Naive thymus-derived CD8-positive, alpha-beta T cell (primary cell): ENCODE measurements at regions of chr20 and their contacts with region 1.

Region 1: GRCh38 chr20:62937366-62938104 is 412 bp upstream of the GID8 start:
- DNase-seq: peak; percentile 95 to 98 (median 96)
- ATAC-seq: peak; percentile 85 to 90
- H3K4me3 Mint-ChIP-seq: peak overlapping the region in 5 of 10 donors; percentile 93 to 100 (median 98)
- H3K27ac Mint-ChIP-seq: peak overlapping the region; percentile 92 to 100 (median 98)
- H3K4me1 Mint-ChIP-seq: peaks cover 21 to 52% (median 41%) of the 10 kb centered on the region in 4 donors
- H3K27me3 Mint-ChIP-seq: no peaks in the 10 kb centered on the region

Region 2: DNA sequence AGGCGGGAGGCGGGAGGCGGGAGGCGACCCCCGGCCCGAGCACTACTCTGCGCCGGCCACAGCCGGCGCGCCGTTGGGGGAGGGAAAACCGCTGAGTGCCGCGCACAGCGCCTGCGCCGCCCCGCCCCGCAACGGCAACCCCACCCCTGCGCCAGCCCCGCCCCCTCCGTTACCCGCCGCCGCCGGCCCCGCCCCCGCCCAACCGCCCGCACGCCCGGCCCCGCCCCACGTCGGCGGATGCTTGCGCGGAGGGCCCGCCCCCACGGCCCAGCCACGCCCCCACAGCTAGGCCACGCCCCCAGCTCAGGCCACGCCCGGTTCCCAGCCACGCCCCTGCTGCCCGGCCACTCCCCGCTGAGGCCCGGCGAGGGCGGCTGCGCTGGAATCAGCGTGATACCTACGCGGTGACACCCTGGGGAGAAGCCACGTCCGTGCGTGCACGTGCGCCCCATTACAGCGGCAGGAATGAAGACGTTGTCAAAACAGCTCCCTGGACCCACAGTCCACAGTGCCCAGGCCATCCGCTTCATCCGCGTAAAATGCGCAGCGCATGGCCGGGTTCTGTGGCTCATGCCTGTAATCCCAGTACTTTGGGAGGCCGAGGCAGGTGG is 75.7 kb before region 1 on chr20 and contains the start of gene TCFL5:
- POLR2A ChIA-PET with region 1: interaction called, 10 read pairs
- DNase-seq: peak; percentile 85 to 98 (median 94)
- ATAC-seq: peak; percentile 80 to 87
- H3K4me3 Mint-ChIP-seq: peak within 1 kb of the TSS; percentile 54 to 88 (median 72)
- H3K27ac Mint-ChIP-seq: peak within 1 kb of the TSS in 9 of 10 donors; percentile 37 to 94 (median 87)
- H3K4me1 Mint-ChIP-seq: peaks cover 9 to 29% (median 22%) of the 10 kb centered on the region in 4 donors
- H3K27me3 Mint-ChIP-seq: no peaks in the 10 kb centered on the region
- polyA plus RNA-seq, gene TCFL5: 1.0 to 2.1 (median 1.5) TPM

Region 3: GRCh38 chr20:62900052-62900691 is 37.4 kb before region 1 on chr20:
- POLR2A ChIA-PET with region 1: interaction called, 21 read pairs
- DNase-seq: peak; percentile 63 to 87 (median 77)
- ATAC-seq: peak; percentile 88 to 93
- H3K4me3 Mint-ChIP-seq: peak overlapping the region in 9 of 10 donors; percentile 54 to 85 (median 76)
- H3K27ac Mint-ChIP-seq: peak overlapping the region; percentile 33 to 96 (median 91)
- H3K4me1 Mint-ChIP-seq: peaks cover 18 to 40% (median 34%) of the 10 kb centered on the region in 4 donors
- H3K27me3 Mint-ChIP-seq: no peaks in the 10 kb centered on the region

Region 4: DNA sequence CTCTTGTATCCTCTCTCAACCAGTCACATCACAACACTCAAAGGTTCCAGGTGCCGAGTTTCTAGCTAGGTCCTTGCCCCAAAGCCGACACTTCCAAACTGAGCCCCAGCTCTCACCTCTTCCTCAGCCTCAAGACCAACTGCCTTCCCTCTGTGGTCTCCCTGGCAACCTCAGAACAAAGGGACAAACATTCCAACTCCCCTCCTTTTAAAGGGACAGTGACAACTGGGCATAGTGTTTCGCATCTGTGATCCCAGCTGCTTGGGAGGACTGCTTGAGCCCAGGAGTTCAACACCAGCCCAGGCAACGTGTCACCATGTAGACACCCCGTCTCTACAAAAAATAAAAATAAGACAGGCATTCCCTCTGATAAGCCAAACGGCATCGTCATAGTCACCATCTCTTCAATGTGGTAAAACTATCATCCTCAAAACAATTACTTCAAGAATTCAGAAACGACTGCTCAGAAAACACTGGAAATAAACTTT is 22.5 kb before region 1 on chr20:
- POLR2A ChIA-PET with region 1: interaction called, 45 read pairs
- DNase-seq: peak in 6 of 10 donors; percentile 40 to 53 (median 48)
- ATAC-seq: peak; percentile 36 to 48
- H3K4me3 Mint-ChIP-seq: peak overlapping the region; percentile 59 to 85 (median 78)
- H3K27ac Mint-ChIP-seq: peak overlapping the region; percentile 81 to 97 (median 94)
- H3K4me1 Mint-ChIP-seq: peaks cover 38 to 83% (median 82%) of the 10 kb centered on the region in 4 donors
- H3K27me3 Mint-ChIP-seq: no peaks in the 10 kb centered on the region

Region 5: DNA sequence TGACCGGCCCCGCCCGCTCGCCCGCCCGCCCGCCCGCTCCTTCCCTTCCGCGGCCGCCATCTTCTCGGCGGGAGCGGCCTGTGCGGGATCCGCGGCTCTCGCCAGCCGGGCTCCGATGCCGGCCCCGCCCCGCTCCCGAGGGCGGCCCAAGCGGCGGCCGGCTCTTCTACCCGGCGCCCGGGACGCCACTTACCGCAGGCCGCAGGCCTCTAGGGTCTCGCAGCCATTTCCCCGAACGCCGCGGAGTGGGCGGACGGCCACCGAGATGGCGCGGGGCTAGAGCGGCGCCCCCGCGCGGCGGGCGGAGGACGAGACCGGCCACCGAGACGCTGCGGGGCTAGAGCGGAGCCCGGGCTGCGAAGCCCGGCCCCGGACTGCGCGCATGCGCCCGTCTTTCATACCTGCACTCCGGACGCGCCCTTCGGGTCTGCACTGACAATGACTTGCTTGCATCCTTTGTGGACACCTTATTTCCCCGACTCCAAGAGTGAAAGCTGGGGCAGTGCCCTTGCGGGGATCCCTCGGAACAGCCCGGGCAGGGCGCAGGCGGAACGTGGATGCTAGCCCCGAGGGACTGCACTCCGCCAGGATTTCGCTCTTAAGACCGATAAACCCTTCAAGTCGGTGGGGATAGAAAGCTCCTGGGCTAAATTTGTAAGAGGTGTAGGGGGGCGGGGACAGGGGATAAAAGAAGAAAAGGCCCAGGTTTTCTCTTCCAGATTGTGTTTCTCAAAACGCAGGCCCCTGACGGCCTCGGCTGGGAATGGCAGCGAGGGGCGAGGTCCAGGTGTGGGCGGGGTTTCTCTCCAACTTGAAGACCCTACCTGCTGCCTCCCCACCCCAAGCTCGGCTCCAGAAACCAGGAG is 11.1 kb before region 1 on chr20 and contains the start of gene DIDO1:
- POLR2A ChIA-PET with region 1: interaction called, 111 read pairs
- DNase-seq: peak; percentile 77 to 92 (median 86)
- ATAC-seq: peak; percentile 79 to 84
- H3K4me3 Mint-ChIP-seq: peak within 1 kb of the TSS; percentile 91 to 98 (median 95)
- H3K27ac Mint-ChIP-seq: peak within 1 kb of the TSS; percentile 87 to 97 (median 95)
- H3K4me1 Mint-ChIP-seq: peaks cover 40 to 82% (median 72%) of the 10 kb centered on the region in 4 donors
- H3K27me3 Mint-ChIP-seq: no peaks in the 10 kb centered on the region
- polyA plus RNA-seq, gene DIDO1: 26.8 to 45.8 (median 39.7) TPM

Region 6: DNA sequence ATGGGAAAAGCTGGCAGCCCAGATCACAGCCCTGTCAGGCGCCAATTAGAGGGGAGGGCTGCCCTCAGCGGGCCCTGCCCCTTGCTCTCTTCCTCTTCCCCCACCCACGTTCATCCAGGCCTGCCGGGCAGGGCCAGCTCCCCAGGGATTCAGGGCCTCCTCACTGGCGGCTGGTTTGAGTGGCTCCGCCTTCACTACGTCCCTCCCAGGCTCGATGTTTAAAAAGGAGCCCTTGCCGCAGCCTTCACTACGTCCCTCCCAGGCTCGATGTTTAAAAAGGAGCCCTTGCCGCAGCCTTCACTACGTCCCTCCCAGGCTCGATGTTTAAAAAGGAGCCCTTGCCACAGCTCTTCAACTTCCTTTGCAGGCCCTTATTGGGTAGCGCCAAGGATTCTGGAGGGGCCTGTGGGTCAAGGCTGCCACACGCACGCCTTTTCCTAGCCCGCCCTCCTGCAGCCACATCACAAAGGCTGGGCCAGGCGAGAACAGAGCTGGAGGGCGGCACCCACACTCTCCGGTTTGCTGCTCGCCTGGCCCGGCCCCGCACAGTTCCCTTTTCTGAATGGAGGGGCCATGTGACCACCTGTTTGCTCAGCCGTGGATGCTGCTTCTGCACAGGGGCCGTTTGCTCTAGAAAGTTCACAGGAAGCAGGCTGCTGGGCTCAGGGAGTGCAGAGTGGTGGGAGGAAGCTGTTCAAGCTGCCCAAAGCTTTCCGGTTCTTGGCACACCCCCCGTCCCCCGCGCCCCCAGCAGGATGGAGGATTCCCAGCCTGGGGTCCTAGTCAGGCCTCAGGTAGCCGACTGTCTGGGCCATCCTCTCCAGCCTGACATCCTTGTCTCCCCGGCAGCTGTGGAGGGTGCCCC is 16.5 kb after region 1 on chr20:
- POLR2A ChIA-PET with region 1: interaction called, 90 read pairs
- DNase-seq: peak; percentile 59 to 92 (median 80)
- ATAC-seq: peak; percentile 89 to 90
- H3K4me3 Mint-ChIP-seq: peak overlapping the region; percentile 76 to 92 (median 88)
- H3K27ac Mint-ChIP-seq: peak overlapping the region; percentile 88 to 97 (median 95)
- H3K4me1 Mint-ChIP-seq: peaks cover 13 to 67% (median 38%) of the 10 kb centered on the region in 4 donors
- H3K27me3 Mint-ChIP-seq: no peaks in the 10 kb centered on the region

Region 7: DNA sequence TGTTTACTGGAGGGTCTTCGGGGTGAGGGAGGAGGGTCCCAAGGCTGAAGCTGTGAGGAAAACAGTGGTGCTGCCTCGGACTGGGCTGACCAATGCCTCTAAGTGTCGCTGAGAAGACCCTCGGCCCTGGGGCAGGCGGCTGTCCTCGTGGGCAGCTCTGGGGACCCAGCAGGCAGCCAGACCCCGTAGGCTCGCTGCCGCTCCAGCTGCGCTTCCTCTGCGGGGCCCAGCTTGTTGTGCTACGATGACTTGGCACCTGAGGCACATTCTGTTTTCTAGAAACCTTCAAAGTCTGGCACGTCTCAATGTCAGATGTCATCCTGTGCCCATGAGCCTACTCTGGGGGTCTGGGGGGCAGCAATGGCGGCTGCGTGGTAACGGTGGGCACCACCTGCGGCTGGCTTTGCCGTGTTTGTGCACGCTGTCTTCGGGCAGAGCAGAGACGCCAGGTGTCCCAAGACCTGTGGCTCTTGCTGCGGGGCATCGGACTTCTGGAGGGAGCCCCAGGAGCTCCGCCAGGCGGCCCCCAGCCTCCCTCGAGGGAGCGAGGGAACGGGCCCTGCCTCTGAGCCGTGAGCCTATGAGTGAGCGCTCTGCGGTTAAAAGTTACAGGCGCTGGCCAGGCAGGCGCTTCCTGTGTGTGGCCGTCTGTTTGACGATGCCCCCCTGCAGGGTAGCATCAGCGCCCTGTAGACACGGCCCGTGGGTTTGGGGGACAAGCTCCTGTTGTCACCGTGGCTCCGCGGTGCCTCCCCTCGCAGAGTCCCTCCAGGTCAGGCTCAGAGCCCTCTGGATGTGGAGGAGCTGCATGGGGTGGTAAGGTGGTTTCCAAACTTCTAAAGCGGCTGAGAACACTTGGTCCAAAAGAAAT is 21.8 kb after region 1 on chr20:
- POLR2A ChIA-PET with region 1: interaction called, 90 read pairs
- DNase-seq: peak in 3 of 10 donors; percentile 26 to 61 (median 38)
- ATAC-seq: peak; percentile 47 to 56
- H3K4me3 Mint-ChIP-seq: peak overlapping the region; percentile 11 to 69 (median 47)
- H3K27ac Mint-ChIP-seq: peak overlapping the region in 8 of 10 donors; percentile 31 to 77 (median 71)
- H3K4me1 Mint-ChIP-seq: peaks cover 3 to 47% (median 25%) of the 10 kb centered on the region in 4 donors
- H3K27me3 Mint-ChIP-seq: no peaks in the 10 kb centered on the region

Region 8: DNA sequence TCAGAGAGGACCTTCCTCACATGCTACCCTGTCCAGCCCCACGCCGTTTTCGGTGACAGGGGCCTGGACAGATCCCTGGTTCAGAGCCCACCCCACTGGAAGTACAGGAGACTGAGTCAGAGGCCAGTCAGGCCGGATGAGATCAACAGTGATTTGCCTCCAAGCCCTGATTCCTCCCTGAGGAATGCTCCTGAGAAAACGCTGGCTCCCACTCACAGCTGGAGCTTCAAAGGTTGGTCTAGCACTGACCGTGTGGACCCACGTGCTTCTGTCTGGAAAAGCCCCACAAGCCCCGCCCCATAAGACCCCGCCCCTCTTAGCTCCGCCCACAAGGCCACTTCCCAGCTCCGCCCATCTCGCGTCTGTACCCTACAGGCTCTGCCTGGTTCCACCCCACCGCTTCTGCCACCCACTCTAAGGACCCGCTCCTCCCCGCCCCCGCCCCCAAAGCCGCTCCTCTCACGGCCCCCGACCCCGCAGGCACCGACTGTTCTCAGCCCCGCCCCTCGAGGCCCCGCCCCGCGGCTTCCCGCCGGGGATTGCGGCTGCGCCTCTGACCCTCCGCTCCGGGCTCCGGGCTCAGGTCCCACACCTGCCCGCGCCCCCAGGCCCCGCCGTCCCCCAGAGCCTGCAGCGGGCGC is 134.1 kb after region 1 on chr20:
- POLR2A ChIA-PET with region 1: no interaction called
- DNase-seq: peak in 3 of 10 donors; percentile 9 to 43 (median 30)
- ATAC-seq: peak; percentile 65 to 78
- H3K4me3 Mint-ChIP-seq: peak overlapping the region in 9 of 10 donors; percentile 28 to 68 (median 58)
- H3K27ac Mint-ChIP-seq: no peak overlapping the region
- H3K4me1 Mint-ChIP-seq: peaks cover 0 to 15% (median 3%) of the 10 kb centered on the region in 4 donors
- H3K27me3 Mint-ChIP-seq: peaks cover 18 to 65% (median 42%) of the 10 kb centered on the region in 5 donors